ENCODE measurements at regions of chr18 and their contacts with region 1.

Region 1: DNA sequence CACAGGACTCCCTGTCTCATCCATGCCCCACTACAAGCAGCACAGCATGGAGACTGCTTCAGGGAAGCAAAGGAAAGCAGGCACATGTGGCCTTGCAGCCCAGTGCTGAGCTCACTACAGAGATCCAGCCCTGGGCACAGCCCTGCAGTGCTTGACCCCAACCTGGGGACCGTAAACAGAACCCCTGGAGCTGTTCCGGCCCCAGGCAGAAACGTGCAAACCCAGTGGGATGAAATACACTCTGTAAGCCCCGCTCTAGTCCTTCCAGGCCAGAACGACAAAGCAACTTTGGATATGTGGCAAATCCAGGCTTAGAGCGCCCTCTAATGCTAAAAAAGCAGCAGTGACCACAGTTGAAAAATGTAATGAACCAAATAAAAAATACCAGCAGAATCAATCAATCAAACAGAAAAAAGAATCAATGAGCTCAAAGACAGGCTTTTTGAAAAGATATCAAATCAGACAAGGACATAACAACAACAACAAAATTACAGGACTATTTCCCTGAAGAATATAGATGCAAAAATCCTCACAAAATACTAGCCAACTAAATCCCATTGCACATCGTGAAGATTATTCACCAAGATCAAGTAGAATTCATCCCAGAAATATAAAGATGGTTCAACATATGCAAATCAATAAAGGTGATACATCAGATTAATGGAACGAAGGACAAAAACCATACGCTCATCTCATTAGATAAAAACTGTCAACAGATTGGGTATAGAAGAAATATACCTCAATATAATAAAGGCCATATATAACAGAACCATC is 45.6 kb downstream of the ZNF519 start:
- DNase-seq: no peak
- H3K4me3 ChIP-seq: no peak overlapping the region
- H3K27ac ChIP-seq: no peak overlapping the region
- H3K4me1 ChIP-seq: no peaks in the 10 kb centered on the region
- H3K27me3 ChIP-seq: no peaks in the 10 kb centered on the region
- CTCF ChIP-seq: peak; percentile 66

Region 2: GRCh38 chr18:13823707-13824395 is 262.8 kb before region 1 on chr18 and contains the start of gene MC5R:
- intact Hi-C with region 1: loop called (anchors 10 kb)
- DNase-seq: peak; percentile 61
- H3K4me3 ChIP-seq: peak within 1 kb of the TSS; percentile 66
- H3K27ac ChIP-seq: no peak within 1 kb of the TSS
- H3K4me1 ChIP-seq: peaks cover 4% of the 10 kb centered on the region
- H3K27me3 ChIP-seq: peaks cover 64% of the 10 kb centered on the region
- CTCF ChIP-seq: peak; percentile 88
- total RNA-seq, gene MC5R: not detected

Region 3: DNA sequence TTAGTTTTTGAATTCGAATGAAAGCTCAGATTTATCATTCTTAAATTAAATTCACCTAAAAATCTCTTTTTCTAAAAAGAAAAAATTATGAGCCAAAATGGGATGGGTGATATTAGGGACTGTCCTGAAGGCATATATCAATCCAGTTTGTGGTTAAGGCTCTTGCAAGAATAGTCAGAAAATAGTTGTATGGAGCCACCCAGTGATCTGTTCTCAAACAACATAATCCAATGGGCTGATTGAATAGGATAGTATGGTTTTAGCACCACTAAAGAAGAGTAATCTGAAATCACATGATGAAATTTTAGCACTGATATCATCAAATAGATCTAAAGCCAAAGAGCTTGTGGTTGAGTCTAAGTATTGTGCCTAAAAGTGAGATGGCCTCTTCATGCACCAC is 42.7 kb before region 1 on chr18:
- intact Hi-C with region 1: no loop called
- DNase-seq: no peak
- H3K4me3 ChIP-seq: no peak overlapping the region
- H3K27ac ChIP-seq: no peak overlapping the region
- H3K4me1 ChIP-seq: no peaks in the 10 kb centered on the region
- H3K27me3 ChIP-seq: no peaks in the 10 kb centered on the region
- CTCF ChIP-seq: no peak